CD8-positive, alpha-beta T cell (primary cell): ENCODE measurements at regions of chr9 and their contacts with region 1.

Region 1: DNA sequence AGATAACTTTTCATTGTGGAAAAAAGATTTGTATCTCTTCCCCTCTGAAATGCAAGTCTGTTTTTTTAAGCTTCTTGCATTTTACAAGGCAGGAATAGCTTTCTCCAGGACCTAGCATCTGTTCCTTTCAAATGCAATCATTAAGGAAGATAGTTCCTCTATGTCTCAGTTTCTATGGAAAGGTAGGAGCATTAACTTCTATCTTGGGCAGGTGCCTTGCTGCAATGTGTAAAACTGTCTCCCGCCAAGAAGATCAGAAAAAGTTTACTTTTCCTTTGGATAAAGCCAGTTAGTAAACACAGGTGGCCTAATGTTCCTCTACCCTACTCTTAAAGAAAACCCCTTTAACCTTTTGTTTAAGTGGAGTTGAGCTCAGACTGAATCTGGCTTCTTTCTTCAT is 560.6 kb upstream of the CYLC2 start:
- DNase-seq: no peak
- ATAC-seq: no peak
- H3K4me3 ChIP-seq: no peak overlapping the region
- H3K4me3 Mint-ChIP-seq: no peak overlapping the region
- H3K27ac ChIP-seq: no peak overlapping the region
- H3K27ac Mint-ChIP-seq: no peak overlapping the region
- H3K4me1 ChIP-seq: no peaks in the 10 kb centered on the region
- H3K4me1 Mint-ChIP-seq: no peaks in the 10 kb centered on the region
- H3K27me3 ChIP-seq: no peaks in the 10 kb centered on the region
- H3K27me3 Mint-ChIP-seq: no peaks in the 10 kb centered on the region
- CTCF ChIP-seq: no peak

Region 2: GRCh38 chr9:102398205-102398604 is 36.3 kb before region 1 on chr9:
- CTCF ChIA-PET with region 1: no interaction called
- POLR2A ChIA-PET with region 1: no interaction called
- intact Hi-C with region 1: no loop called
- DNase-seq: no peak
- ATAC-seq: no peak
- H3K4me3 ChIP-seq: no peak overlapping the region
- H3K4me3 Mint-ChIP-seq: no peak overlapping the region
- H3K27ac ChIP-seq: no peak overlapping the region
- H3K27ac Mint-ChIP-seq: no peak overlapping the region
- H3K4me1 ChIP-seq: no peaks in the 10 kb centered on the region
- H3K4me1 Mint-ChIP-seq: no peaks in the 10 kb centered on the region
- H3K27me3 ChIP-seq: no peaks in the 10 kb centered on the region
- H3K27me3 Mint-ChIP-seq: no peaks in the 10 kb centered on the region
- CTCF ChIP-seq: no peak

Region 3: GRCh38 chr9:102456562-102456961 is 22.0 kb after region 1 on chr9:
- CTCF ChIA-PET with region 1: no interaction called
- POLR2A ChIA-PET with region 1: no interaction called
- intact Hi-C with region 1: loop called in 1 of 2 experiments (anchors 2 kb)
- DNase-seq: no peak
- ATAC-seq: no peak
- H3K4me3 ChIP-seq: no peak overlapping the region
- H3K4me3 Mint-ChIP-seq: no peak overlapping the region
- H3K27ac ChIP-seq: no peak overlapping the region
- H3K27ac Mint-ChIP-seq: no peak overlapping the region
- H3K4me1 ChIP-seq: no peaks in the 10 kb centered on the region
- H3K4me1 Mint-ChIP-seq: no peaks in the 10 kb centered on the region
- H3K27me3 ChIP-seq: no peaks in the 10 kb centered on the region
- H3K27me3 Mint-ChIP-seq: no peaks in the 10 kb centered on the region
- CTCF ChIP-seq: no peak